Esophagus muscularis mucosa (tissue), 4 donors: ENCODE measurements at regions of chr5 and their contacts with region 1.

Region 1: DNA sequence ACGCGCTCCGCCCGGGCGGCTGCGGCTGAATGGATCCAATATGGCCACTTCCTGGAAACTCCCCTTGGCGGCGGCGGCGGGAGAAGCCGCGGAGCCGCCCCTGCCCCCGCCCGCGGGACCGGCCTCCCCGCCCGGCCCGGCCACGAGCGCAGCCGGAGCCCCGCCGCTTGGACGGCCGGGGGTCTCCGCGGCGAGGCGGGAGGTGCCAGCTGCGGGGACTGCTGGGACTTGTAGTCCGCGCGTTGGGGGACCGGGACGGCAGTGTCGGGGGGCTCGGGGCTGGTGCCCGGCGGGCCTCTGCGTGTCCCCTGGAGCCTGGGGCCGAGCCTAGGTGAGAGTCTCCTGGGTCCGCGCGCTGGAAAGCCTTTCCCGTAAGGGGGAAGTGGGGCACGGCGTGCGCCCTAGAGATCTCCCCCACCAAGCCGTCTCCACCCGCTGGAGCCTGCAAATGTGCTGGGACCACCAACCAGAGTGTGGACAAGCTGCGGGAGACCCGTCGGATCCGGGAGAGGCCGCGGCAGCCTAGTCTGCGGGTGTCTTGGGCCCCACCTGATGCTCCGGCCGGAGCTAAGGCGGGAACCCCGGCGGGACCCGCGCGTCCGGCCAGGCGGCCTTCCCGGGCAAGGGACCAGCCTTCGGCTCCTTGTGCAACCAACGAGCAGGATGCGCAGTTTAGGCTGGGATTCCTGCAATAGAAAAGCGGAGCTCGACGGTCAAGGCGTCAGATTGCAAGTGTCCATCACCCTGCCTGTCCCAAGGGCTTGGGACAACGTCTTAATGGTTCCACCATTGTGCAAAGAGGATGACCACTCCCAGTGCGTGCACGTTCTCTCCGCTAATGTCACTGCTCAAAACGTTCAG is at the start of gene SEPTIN8:
- DNase-seq: no peak
- H3K4me3 ChIP-seq: peak within 1 kb of the TSS; percentile 87 to 95 (median 90)
- H3K27ac ChIP-seq: peak within 1 kb of the TSS; percentile 79 to 88 (median 84)
- H3K4me1 ChIP-seq: peaks cover 30 to 54% (median 48%) of the 10 kb centered on the region in 4 donors
- H3K27me3 ChIP-seq: no peaks in the 10 kb centered on the region
- CTCF ChIP-seq: no peak
- EP300 ChIP-seq: no peak
- POLR2A ChIP-seq: no peak
- total RNA-seq, gene SEPTIN8: 26.7 to 42.8 (median 36.9) TPM

Region 2: DNA sequence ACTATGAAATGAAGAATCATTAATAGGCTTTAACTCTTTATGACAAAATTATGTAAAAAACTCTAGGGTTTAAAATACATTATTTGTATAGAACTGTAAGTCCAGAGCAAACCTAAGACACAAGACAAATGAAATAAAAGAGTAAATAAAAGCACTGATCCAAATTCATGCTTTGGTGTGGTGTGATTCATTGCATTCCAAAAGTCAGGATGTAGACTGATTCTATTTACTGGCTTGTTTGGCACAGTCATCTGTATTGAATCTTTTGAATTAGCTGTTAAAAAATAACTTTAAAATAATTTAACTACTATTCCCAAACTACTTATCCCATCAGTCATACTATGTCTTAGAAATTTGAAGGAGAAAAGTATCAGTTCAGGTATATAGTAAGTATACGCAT is 72.6 kb before region 1 on chr5:
- intact Hi-C with region 1: no loop called
- DNase-seq: no peak
- H3K4me3 ChIP-seq: no peak overlapping the region
- H3K27ac ChIP-seq: no peak overlapping the region
- H3K4me1 ChIP-seq: no peaks in the 10 kb centered on the region
- H3K27me3 ChIP-seq: no peaks in the 10 kb centered on the region
- CTCF ChIP-seq: no peak
- EP300 ChIP-seq: no peak
- POLR2A ChIP-seq: no peak

Region 3: GRCh38 chr5:132736853-132737833 is 40.3 kb before region 1 on chr5 and contains the start of gene KIF3A:
- intact Hi-C with region 1: loop called (anchors 5 kb)
- DNase-seq: peak; percentile 96
- H3K4me3 ChIP-seq: peak within 1 kb of the TSS; percentile 73 to 93 (median 77)
- H3K27ac ChIP-seq: peak within 1 kb of the TSS; percentile 72 to 78 (median 78)
- H3K4me1 ChIP-seq: peaks cover 8 to 15% (median 13%) of the 10 kb centered on the region in 4 donors
- H3K27me3 ChIP-seq: peaks cover 0 to 8% (median 0%) of the 10 kb centered on the region in 4 donors
- CTCF ChIP-seq: peak in 2 of 3 experiments; percentile 28 to 47
- EP300 ChIP-seq: no peak
- POLR2A ChIP-seq: no peak
- total RNA-seq, gene KIF3A: 5.5 to 9.6 (median 8.3) TPM